Transverse colon (tissue), 4 donors: ENCODE measurements at regions of chr2 and their contacts with region 1.

Region 1: DNA sequence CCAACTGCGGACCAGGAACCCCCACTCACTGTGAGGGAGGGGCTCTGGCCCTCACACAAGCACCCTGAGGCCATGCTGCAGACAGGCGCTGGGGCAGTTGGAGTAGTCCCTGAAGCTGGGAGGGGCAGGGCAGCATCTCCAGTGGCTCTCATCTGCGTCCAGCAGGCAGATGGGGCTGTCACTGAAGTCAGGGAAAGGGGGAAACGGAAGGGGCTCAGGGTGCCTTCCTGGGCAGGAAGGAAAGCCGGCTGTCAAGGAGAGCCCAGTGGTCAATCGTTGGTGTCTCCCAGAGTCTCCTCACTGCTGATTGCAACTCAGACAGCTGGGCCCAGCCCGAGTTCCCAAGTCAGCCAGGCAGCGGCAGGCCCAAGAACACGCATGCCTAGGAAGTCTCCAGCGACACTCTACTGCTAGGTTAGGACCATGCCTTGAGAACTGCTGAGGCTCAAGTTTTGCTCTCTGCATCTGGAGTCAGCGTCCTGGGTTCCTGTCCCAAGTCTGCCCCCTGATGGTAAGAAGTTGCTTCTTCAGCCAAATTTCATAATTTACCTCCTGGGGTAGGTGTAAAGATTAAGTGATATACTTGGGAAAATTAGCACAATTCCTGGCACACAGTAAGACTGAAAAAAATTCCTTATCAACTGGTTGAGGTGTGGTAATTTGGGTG is 27.5 kb upstream of the NMUR1 start:
- DNase-seq: peak; percentile 50
- H3K4me3 ChIP-seq: no peak overlapping the region
- H3K27ac ChIP-seq: peak overlapping the region; percentile 39 to 86 (median 60)
- H3K4me1 ChIP-seq: peaks cover 0 to 26% (median 10%) of the 10 kb centered on the region in 4 donors
- H3K27me3 ChIP-seq: no peaks in the 10 kb centered on the region
- CTCF ChIP-seq: peak; percentile 59 to 88 (median 74)
- EP300 ChIP-seq: no peak
- POLR2A ChIP-seq: no peak

Region 2: GRCh38 chr2:231486851-231487596 is 70.7 kb before region 1 on chr2:
- in situ Hi-C with region 1: no loop called
- intact Hi-C with region 1: loop called (anchors 1 kb)
- DNase-seq: no peak
- H3K4me3 ChIP-seq: no peak overlapping the region
- H3K27ac ChIP-seq: no peak overlapping the region
- H3K4me1 ChIP-seq: peaks cover 0 to 6% (median 3%) of the 10 kb centered on the region in 4 donors
- H3K27me3 ChIP-seq: no peaks in the 10 kb centered on the region
- CTCF ChIP-seq: no peak
- EP300 ChIP-seq: no peak
- POLR2A ChIP-seq: no peak

Region 3: DNA sequence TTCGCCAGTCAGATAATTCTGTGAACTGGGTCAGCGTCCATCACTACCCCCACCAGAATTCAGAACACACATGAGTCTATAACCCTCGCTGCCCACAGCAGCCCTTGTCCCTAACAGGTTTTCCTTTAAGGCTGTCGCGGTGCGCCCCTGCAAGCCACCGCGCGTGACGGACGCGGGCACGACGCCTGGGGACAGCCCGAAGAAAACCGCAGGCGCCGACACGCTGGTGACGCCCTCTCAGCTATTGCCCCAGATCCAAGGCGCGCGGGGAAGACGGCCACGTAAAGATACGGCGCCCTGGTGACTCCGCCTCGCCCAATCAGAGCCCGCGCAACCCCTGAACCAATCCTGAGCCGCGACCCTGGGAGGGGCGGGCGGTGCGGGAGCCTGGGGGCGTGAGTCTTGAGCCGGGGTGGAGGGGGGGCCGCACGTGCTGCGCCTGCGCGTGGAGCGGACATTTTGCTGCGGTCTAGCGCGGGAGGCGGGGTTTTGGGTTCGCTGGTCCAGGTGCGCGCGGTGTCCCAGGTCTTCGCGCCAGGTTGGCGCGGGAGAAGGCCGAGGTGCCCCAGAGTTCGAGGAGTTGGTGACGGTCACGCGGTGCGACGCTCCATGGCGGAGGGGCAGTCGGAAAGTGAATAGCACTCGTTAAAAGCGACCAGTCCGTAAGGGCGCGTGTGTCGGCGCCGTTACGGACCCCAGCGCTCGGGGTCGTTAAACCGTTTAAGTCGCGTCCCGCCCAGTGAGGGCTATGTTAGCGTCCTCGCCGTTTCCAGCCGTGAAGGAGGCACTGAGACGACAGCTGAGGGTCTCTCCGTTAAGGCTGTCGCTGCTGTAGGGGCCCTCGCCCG is 43.4 kb before region 1 on chr2:
- in situ Hi-C with region 1: no loop called
- intact Hi-C with region 1: loop called (anchors 1 kb)
- DNase-seq: peak; percentile 98
- H3K4me3 ChIP-seq: peak overlapping the region; percentile 57 to 91 (median 59)
- H3K27ac ChIP-seq: peak overlapping the region; percentile 85 to 93 (median 89)
- H3K4me1 ChIP-seq: peaks cover 0 to 14% (median 6%) of the 10 kb centered on the region in 4 donors
- H3K27me3 ChIP-seq: no peaks in the 10 kb centered on the region
- CTCF ChIP-seq: no peak
- EP300 ChIP-seq: no peak
- POLR2A ChIP-seq: peak; percentile 86